A673 (cell line): ENCODE measurements at regions of chr10 and their contacts with region 1.

Region 1: DNA sequence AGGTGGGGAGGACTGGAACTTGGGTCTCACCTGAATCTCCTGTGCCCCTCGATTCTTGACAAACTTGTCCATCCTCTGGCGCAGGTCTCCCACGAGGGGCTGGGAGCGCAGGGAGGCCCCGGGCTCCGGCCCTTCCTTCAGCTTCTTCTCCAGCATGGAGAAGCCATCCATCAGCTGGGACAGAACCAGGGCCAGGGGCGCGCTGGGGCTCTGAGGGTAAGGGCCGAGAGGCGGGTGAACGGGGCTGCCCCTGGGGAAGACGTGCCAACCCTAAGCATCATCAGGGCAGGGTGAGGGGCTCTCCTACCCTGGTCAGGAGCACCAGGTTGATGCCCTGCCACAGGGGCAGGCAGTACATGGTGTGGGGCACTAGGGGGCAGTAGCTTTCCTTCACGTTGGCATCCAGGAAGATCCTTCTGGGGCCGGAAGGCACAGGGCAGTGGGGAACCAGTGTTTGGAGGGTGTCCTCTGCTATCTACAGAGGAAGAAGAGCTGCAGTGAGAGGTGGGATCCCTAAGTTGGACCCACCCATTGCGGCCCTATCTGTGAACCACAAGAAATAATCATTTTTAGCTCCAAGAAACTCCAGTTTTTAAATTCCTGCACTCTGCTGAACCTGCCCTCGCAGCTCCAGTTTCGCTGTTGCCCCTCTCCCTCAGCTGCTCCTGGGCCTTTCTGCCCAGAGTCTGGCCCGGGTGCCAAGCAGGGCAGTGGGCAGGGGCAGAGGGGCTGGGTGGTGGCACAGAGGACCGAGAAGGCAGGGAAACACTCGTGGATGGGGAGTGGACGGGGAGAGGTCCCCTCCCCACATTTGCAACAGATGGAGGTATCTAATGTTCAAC is 10.8 kb upstream of the PYROXD2 start:
- DNase-seq: peak; percentile 44
- H3K4me3 ChIP-seq: no peak overlapping the region
- H3K27ac ChIP-seq: no peak overlapping the region
- H3K4me1 ChIP-seq: no peaks in the 10 kb centered on the region
- H3K27me3 ChIP-seq: no peaks in the 10 kb centered on the region
- CTCF ChIP-seq: peak; percentile 76

Region 2: GRCh38 chr10:98224509-98224908 is 201.2 kb before region 1 on chr10:
- CTCF ChIA-PET with region 1: no interaction called
- POLR2A ChIA-PET with region 1: no interaction called
- intact Hi-C with region 1: no loop called
- DNase-seq: no peak
- H3K4me3 ChIP-seq: no peak overlapping the region
- H3K27ac ChIP-seq: no peak overlapping the region
- H3K4me1 ChIP-seq: no peaks in the 10 kb centered on the region
- H3K27me3 ChIP-seq: no peaks in the 10 kb centered on the region
- CTCF ChIP-seq: no peak

Region 3: DNA sequence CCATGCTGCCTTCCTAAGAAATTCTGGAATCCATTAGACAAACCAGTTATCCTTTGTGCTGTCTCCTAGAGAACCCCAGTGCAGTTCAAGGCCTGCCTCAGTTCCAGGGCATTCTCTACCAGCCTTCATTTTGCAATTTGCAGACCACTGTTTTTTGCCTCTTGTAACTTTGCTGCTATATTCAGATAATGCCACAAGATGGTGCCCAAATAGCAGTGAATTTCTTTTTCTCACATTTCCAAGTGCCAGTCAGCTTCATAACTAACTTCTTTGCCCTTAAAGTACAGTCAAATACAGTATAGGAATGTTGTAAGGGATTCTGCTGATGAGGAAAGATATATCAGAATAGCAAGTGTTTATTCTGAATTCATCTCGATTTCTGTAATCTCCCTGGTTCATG is 182.9 kb before region 1 on chr10:
- CTCF ChIA-PET with region 1: no interaction called
- POLR2A ChIA-PET with region 1: no interaction called
- intact Hi-C with region 1: loop called (anchors 10 kb)
- DNase-seq: peak; percentile 30
- H3K4me3 ChIP-seq: no peak overlapping the region
- H3K27ac ChIP-seq: no peak overlapping the region
- H3K4me1 ChIP-seq: no peaks in the 10 kb centered on the region
- H3K27me3 ChIP-seq: no peaks in the 10 kb centered on the region
- CTCF ChIP-seq: peak; percentile 47; the same call in 1 of the 2 replicates